CD4-positive, alpha-beta memory T cell (primary cell): ENCODE measurements at regions of chr5 and their contacts with region 1.

Region 1: DNA sequence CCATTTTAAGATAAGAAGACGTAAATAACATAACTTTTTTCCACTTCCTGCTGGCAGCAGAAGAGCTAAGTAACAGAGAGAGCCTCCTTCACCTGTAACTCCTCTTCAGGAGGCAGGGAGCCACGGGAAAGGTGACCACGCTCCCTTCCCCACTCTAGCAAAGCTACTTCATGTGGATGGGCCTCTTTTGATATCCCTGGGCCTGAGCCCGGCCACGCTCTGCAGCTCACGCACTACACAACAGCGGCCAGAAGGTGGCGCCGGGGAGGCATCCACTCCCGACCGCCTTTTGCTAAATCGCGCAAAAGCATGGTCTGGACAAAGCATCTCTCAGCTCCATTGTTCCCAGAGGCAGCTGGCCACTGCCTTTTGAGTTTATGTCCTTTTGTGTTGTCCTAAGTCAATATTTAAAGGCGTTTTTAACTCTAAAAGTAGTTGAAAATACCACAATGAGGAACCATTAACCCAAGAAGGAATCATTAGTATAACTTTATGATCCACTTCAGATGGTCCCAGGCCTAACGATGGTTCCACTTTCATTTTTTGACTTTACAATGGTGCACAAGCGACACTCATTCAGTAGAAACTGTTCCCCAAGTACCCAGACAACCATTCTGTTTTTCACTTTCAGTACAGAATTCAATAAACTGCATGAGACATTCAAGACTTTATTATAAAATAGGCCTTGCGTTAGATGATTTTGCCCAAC is 23.6 kb downstream of the CMBL start:
- DNase-seq: peak; percentile 65 to 76 (median 66)
- H3K4me3 ChIP-seq: no peak overlapping the region
- H3K4me3 Mint-ChIP-seq: peak overlapping the region in 1 of 8 donors; percentile 45
- H3K27ac ChIP-seq: no peak overlapping the region
- H3K27ac Mint-ChIP-seq: no peak overlapping the region
- H3K4me1 ChIP-seq: peaks cover 8% of the 10 kb centered on the region
- H3K4me1 Mint-ChIP-seq: peaks cover 6 to 14% (median 9%) of the 10 kb centered on the region in 4 donors
- H3K27me3 ChIP-seq: no peaks in the 10 kb centered on the region
- H3K27me3 Mint-ChIP-seq: no peaks in the 10 kb centered on the region

Region 2: DNA sequence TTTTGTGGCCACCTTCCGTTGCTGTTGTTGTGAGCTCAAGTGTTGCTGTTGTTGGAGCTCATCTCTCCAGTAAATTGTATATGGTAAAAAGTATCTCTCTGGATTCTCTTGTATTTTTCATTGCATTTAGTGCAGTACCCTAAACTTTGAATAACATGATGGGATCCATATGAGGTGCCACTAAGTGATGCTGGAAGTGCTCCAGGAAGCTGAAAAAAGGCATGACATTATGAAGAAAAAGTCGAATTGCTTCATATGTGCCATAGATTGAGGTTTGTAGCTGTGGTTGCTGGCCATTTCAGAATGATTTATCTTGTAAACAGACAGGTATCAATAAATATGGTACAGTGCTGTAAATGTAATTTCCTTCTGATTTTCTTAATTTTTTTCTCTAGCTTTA is 74.9 kb after region 1 on chr5:
- CTCF ChIA-PET with region 1: interaction called, 18 read pairs
- POLR2A ChIA-PET with region 1: no interaction called
- intact Hi-C with region 1: loop called (anchors 1 kb)
- DNase-seq: no peak
- H3K4me3 ChIP-seq: no peak overlapping the region
- H3K4me3 Mint-ChIP-seq: peak overlapping the region in 2 of 8 donors; percentile 29
- H3K27ac ChIP-seq: no peak overlapping the region
- H3K27ac Mint-ChIP-seq: peak overlapping the region in 1 of 7 donors; percentile 24
- H3K4me1 ChIP-seq: peaks cover 78% of the 10 kb centered on the region
- H3K4me1 Mint-ChIP-seq: peaks cover 46 to 87% (median 68%) of the 10 kb centered on the region in 4 donors
- H3K27me3 ChIP-seq: no peaks in the 10 kb centered on the region
- H3K27me3 Mint-ChIP-seq: no peaks in the 10 kb centered on the region

Region 3: GRCh38 chr5:10364186-10364683 is 80.2 kb after region 1 on chr5:
- CTCF ChIA-PET with region 1: interaction called, 18 read pairs
- POLR2A ChIA-PET with region 1: no interaction called
- intact Hi-C with region 1: loop called (anchors 1 kb)
- DNase-seq: peak in 2 of 5 donors; percentile 15 to 21
- H3K4me3 ChIP-seq: no peak overlapping the region
- H3K4me3 Mint-ChIP-seq: peak overlapping the region in 3 of 8 donors; percentile 13 to 24 (median 21)
- H3K27ac ChIP-seq: no peak overlapping the region
- H3K27ac Mint-ChIP-seq: peak overlapping the region in 3 of 7 donors; percentile 5 to 59 (median 48)
- H3K4me1 ChIP-seq: peaks cover 63% of the 10 kb centered on the region
- H3K4me1 Mint-ChIP-seq: peaks cover 48 to 93% (median 74%) of the 10 kb centered on the region in 4 donors
- H3K27me3 ChIP-seq: no peaks in the 10 kb centered on the region
- H3K27me3 Mint-ChIP-seq: no peaks in the 10 kb centered on the region

Region 4: DNA sequence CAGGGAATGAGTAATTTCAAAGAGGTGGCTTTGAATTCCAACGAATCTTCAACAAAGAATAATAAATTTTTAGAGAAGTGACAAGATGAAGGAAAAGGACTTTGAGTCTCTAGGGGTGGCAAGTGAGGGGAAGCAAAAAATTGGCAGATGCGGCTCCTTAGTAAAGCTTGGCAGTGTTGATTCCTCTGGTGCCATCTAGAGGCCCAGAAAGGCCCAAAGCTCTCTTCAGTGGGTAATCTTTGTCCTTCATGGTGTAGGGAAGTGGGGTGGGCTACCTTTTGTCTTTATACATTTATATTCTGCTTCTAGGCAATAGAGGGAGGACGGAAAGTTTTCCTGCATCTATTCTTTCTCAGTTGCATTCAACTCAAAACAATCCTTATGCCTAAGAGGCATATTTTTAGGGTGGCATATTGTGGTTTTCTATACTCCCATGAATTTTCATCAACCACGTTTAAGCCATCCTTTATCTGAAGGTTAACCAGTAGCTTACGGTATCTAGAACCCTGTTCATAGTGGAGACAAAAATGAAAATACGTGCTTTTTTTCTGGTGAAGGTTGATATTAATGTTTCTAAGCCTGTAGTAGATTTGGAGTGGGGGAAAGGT is 140.1 kb after region 1 on chr5:
- CTCF ChIA-PET with region 1: interaction called, 20 read pairs
- POLR2A ChIA-PET with region 1: no interaction called
- intact Hi-C with region 1: loop called (anchors 5 kb)
- DNase-seq: peak in 3 of 5 donors; percentile 10 to 19 (median 16)
- H3K4me3 ChIP-seq: no peak overlapping the region
- H3K4me3 Mint-ChIP-seq: no peak overlapping the region
- H3K27ac ChIP-seq: no peak overlapping the region
- H3K27ac Mint-ChIP-seq: peak overlapping the region; percentile 25 to 75 (median 49)
- H3K4me1 ChIP-seq: no peaks in the 10 kb centered on the region
- H3K4me1 Mint-ChIP-seq: peaks cover 7 to 33% (median 11%) of the 10 kb centered on the region in 4 donors
- H3K27me3 ChIP-seq: no peaks in the 10 kb centered on the region
- H3K27me3 Mint-ChIP-seq: no peaks in the 10 kb centered on the region